ENCODE measurements at regions of chr7 and their contacts with region 1.

Region 1: GRCh38 chr7:140924019-140924820 is 509 bp downstream of the BRAF start:
- DNase-seq: peak; percentile 74 to 92 (median 84)
- ATAC-seq: peak; percentile 96
- H3K4me3 ChIP-seq: peak overlapping the region; percentile 91
- H3K27ac ChIP-seq: peak overlapping the region; percentile 93
- H3K4me1 ChIP-seq: peaks cover 0 to 3% of the 10 kb centered on the region in 2 experiments; a peak in 2 of 5 replicates
- H3K27me3 ChIP-seq: no peaks in the 10 kb centered on the region
- CTCF ChIP-seq: peak; percentile 59 to 80 (median 71); a peak in 5 of 6 replicates
- EP300 ChIP-seq: no peak
- POLR2A ChIP-seq: peak; percentile 66
- RAD21 ChIP-seq: peak in 1 of 2 experiments; percentile 7; a peak in 2 of 4 replicates

Region 2: DNA sequence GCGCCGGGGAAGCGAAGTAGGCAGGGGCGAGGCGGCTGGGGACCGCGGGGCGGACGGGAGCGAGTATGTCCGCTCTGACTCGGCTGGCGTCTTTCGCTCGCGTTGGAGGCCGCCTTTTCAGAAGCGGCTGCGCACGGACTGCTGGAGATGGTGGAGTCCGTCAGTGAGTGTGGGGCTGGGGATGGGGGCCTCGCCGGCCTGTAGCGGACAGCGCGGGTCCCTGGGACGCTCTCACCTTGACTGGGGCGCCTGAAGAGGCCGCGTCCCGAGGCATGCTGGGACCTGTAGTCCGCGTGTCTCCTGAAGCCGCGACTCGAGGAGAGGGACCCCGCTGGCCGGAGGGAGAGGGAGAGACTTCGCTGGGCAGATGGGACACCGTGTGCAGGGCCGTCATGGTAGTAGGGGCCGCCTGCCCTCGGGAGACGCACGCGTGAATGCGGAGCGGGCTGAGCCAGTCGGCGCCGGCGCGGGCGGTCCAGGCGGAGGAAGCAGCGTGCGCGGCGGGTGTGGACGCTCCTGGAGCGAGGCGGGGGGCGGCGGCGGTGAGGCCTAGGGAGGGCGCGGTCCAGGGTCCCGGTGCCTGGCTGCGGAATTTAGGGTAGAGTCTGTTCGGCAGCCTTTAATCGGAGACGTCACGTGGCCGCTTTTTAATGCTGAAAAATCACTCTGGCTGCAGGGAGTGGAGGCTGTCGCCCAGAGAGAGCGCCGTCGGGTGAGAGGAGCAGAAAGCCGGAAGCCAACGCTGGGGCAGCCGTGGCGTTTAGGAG is 227.4 kb before region 1 on chr7 and contains the start of gene NDUFB2:
- CTCF ChIA-PET with region 1: no interaction called
- POLR2A ChIA-PET with region 1: no interaction called
- in situ Hi-C with region 1: no loop called
- intact Hi-C with region 1: loop called (anchors 10 kb)
- DNase-seq: peak; percentile 89 to 92 (median 91)
- ATAC-seq: peak; percentile 94
- H3K4me3 ChIP-seq: peak within 1 kb of the TSS; percentile 86
- H3K27ac ChIP-seq: peak within 1 kb of the TSS; percentile 85
- H3K4me1 ChIP-seq: peaks cover 18 to 33% of the 10 kb centered on the region in 2 experiments; a peak in 3 of 5 replicates
- H3K27me3 ChIP-seq: no peaks in the 10 kb centered on the region; a peak in 1 of 5 replicates
- CTCF ChIP-seq: peak in 1 of 3 experiments; percentile 2; a peak in 1 of 6 replicates
- EP300 ChIP-seq: no peak
- POLR2A ChIP-seq: peak; percentile 99
- RAD21 ChIP-seq: no peak
- polyA plus RNA-seq, gene NDUFB2: 1,937 to 2,075 TPM

Region 3: GRCh38 chr7:140940898-140941297 is 16.7 kb after region 1 on chr7:
- CTCF ChIA-PET with region 1: no interaction called
- POLR2A ChIA-PET with region 1: interaction called, 13 read pairs
- in situ Hi-C with region 1: no loop called
- intact Hi-C with region 1: no loop called
- DNase-seq: no peak
- ATAC-seq: no peak
- H3K4me3 ChIP-seq: no peak overlapping the region
- H3K27ac ChIP-seq: no peak overlapping the region
- H3K4me1 ChIP-seq: 0 out of 5 replicates have a peak, but pooled peaks cover 0 to 5% of the 10 kb centered on the region in 2 experiments
- H3K27me3 ChIP-seq: peaks cover 9 to 17% of the 10 kb centered on the region in 2 experiments; a peak in 4 of 5 replicates
- CTCF ChIP-seq: no peak
- EP300 ChIP-seq: no peak
- POLR2A ChIP-seq: no peak
- RAD21 ChIP-seq: no peak

Region 4: GRCh38 chr7:141014524-141015395 is 90.5 kb after region 1 on chr7 and contains the start of gene MRPS33:
- CTCF ChIA-PET with region 1: no interaction called
- POLR2A ChIA-PET with region 1: interaction called, 3 read pairs
- in situ Hi-C with region 1: no loop called
- intact Hi-C with region 1: loop called (anchors 5 kb)
- DNase-seq: peak; percentile 99
- ATAC-seq: peak; percentile 99
- H3K4me3 ChIP-seq: peak within 1 kb of the TSS; percentile 53
- H3K27ac ChIP-seq: peak within 1 kb of the TSS; percentile 80
- H3K4me1 ChIP-seq: peaks cover 8 to 21% of the 10 kb centered on the region in 2 experiments; a peak in 2 of 5 replicates
- H3K27me3 ChIP-seq: peaks cover 0 to 2% of the 10 kb centered on the region in 2 experiments; a peak in 1 of 5 replicates
- CTCF ChIP-seq: peak; percentile 92 to 96 (median 96)
- EP300 ChIP-seq: peak; percentile 72
- POLR2A ChIP-seq: peak; percentile 99
- RAD21 ChIP-seq: peak in 1 of 2 experiments; percentile 24; a peak in 1 of 4 replicates
- polyA plus RNA-seq, gene MRPS33: 395 to 442 TPM